A549 (cell line): ENCODE measurements at regions of chr15 and their contacts with region 1.

Region 1: GRCh38 chr15:57306161-57306943 is 70.0 kb upstream of the CGNL1 start:
- DNase-seq: peak; percentile 77 to 96
- ATAC-seq: peak; percentile 88 to 96
- H3K4me3 ChIP-seq: peak overlapping the region; percentile 48
- H3K27ac ChIP-seq: peak overlapping the region; percentile 73 to 87
- H3K4me1 ChIP-seq: peaks cover 16% of the 10 kb centered on the region
- CTCF ChIP-seq: peak; percentile 96
- EP300 ChIP-seq: no peak
- POLR2A ChIP-seq: no peak
- RAD21 ChIP-seq: peak; percentile 88 to 96

Region 2: GRCh38 chr15:56821721-56822425 is 484.5 kb before region 1 on chr15:
- CTCF ChIA-PET with region 1: interaction called, 12 read pairs
- POLR2A ChIA-PET with region 1: no interaction called
- DNase-seq: peak; percentile 58 to 80
- ATAC-seq: peak; percentile 88 to 97
- H3K4me3 ChIP-seq: no peak overlapping the region
- H3K27ac ChIP-seq: peak overlapping the region in 1 of 2 experiments; percentile 52; a peak in 2 of 6 replicates
- H3K4me1 ChIP-seq: peaks cover 7% of the 10 kb centered on the region
- CTCF ChIP-seq: peak; percentile 78
- EP300 ChIP-seq: no peak
- POLR2A ChIP-seq: no peak
- RAD21 ChIP-seq: peak; percentile 84 to 96

Region 3: GRCh38 chr15:57152666-57153539 is 153.4 kb before region 1 on chr15:
- CTCF ChIA-PET with region 1: interaction called, 114 read pairs
- POLR2A ChIA-PET with region 1: no interaction called
- DNase-seq: no peak
- ATAC-seq: no peak
- H3K4me3 ChIP-seq: no peak overlapping the region
- H3K27ac ChIP-seq: no peak overlapping the region
- H3K4me1 ChIP-seq: peaks cover 5% of the 10 kb centered on the region; the same call in 1 of the 3 replicates
- CTCF ChIP-seq: no peak
- EP300 ChIP-seq: no peak
- POLR2A ChIP-seq: no peak
- RAD21 ChIP-seq: no peak

Region 4: GRCh38 chr15:57220205-57220604 is 86.1 kb before region 1 on chr15:
- CTCF ChIA-PET with region 1: no interaction called
- POLR2A ChIA-PET with region 1: no interaction called
- DNase-seq: no peak
- ATAC-seq: no peak
- H3K4me3 ChIP-seq: no peak overlapping the region
- H3K27ac ChIP-seq: no peak overlapping the region
- H3K4me1 ChIP-seq: peaks cover 17% of the 10 kb centered on the region
- CTCF ChIP-seq: no peak
- EP300 ChIP-seq: no peak
- POLR2A ChIP-seq: no peak
- RAD21 ChIP-seq: no peak

Region 5: DNA sequence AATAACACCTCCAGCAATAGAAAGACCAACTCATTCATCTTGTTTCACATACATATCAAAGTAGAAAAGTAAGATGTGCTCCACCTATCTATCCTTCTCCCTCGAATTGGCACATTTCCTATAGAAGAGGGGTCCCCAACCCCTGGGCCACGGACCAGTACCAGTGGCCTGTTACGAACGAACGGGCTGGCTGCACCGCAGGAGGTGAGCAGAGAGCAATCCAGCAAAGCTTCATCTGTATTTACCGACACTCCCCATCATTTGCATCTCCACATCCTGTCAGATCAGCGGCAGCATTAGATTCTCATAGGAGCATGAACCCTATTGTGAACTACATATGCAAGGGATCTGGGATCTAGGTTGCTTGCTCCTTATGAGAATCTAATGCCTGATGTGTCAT is 25.0 kb before region 1 on chr15:
- CTCF ChIA-PET with region 1: interaction called, 49 read pairs
- POLR2A ChIA-PET with region 1: no interaction called
- DNase-seq: no peak
- ATAC-seq: no peak
- H3K4me3 ChIP-seq: no peak overlapping the region
- H3K27ac ChIP-seq: no peak overlapping the region
- H3K4me1 ChIP-seq: no peaks in the 10 kb centered on the region
- CTCF ChIP-seq: no peak
- EP300 ChIP-seq: no peak
- POLR2A ChIP-seq: no peak
- RAD21 ChIP-seq: no peak

Region 6: DNA sequence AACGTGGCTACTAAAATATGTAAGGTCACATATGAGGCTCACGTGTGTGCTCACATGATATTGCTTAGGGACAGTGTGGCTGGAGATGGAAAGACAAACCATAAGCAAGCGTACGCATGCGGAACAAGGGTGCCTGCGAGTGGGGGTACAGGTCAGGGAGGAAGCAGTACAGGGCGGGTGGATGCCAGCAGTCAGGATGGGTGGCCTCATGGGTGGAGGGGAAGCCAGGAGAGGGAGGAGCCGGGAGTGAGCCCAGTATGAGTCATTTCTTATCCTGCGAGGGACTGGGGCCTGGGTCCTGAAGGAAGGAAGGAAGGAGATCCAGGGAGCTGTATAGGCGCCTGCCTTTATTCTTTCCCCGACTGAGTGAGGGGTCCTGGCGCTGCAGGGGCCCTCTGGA is 27.9 kb after region 1 on chr15:
- CTCF ChIA-PET with region 1: interaction called, 15 read pairs
- POLR2A ChIA-PET with region 1: no interaction called
- DNase-seq: no peak
- ATAC-seq: peak; percentile 40 to 64
- H3K4me3 ChIP-seq: no peak overlapping the region
- H3K27ac ChIP-seq: 0 out of 6 replicates have a peak overlapping the region, but pooled peaks of 1 of the 2 experiments have one; percentile 11
- H3K4me1 ChIP-seq: peaks cover 12% of the 10 kb centered on the region; the same call in 2 of the 3 replicates
- CTCF ChIP-seq: no peak
- EP300 ChIP-seq: no peak
- POLR2A ChIP-seq: no peak
- RAD21 ChIP-seq: no peak